ENCODE measurements at regions of chr5 and their contacts with region 1.

Region 1: GRCh38 chr5:180291943-180292831 is at the start of gene MAPK9:
- DNase-seq: peak; percentile 96
- H3K4me3 Mint-ChIP-seq: peak within 1 kb of the TSS; percentile 95
- H3K27ac Mint-ChIP-seq: peak within 1 kb of the TSS; percentile 95
- H3K4me1 Mint-ChIP-seq: peaks cover 28% of the 10 kb centered on the region
- H3K27me3 Mint-ChIP-seq: no peaks in the 10 kb centered on the region
- total RNA-seq, gene MAPK9: 44.5 and 45.0 TPM in 2 replicates

Region 2: DNA sequence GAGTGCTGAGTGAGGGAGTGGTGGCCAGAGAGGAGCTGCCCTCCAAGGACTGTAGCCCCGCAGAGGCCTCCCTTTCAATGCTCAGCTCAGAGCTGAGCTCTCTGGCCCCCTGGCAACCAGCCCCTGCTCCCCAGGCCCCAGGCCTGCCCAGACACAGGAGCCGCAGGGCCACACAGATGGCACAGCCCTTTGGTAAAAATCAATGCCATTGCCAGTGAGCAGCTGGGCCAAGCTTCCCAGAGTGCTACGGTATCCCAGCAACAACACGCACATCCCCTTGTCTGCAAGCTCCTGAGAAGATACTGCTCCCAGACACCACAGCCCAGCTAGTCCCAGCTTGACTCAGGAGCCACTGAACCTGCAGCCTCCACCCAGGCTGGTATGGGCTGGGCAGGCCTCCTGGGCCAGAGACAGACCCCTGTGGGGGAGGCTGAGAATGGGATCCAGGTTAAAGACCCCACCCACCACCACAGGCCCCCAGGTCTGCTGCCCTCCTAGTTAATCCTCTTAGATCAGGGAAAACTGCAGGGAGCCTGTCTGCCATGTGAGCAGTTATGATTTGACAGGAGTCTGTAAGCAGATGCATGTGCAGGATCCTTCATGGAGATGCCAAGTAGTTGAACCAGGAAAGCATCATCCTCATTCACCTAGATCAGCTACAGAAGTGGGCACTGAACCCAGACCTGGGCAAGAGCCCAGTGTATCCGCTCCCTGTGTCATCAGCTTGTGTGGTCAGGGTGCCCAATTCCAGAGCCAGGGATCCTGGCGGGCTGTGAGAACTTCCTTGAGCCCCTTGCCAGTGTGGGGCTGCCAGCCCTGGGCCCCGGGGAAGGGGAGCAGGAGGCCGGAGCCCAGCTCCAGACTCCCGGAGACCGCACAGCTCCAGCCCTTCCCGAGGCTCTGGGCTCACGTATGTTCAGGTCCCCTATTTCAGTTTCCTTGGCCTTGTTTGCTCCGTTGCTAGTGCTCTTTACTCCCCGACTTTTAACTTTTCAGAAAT is 920.2 kb before region 1 on chr5:
- intact Hi-C with region 1: no loop called
- DNase-seq: no peak
- H3K4me3 Mint-ChIP-seq: no peak overlapping the region
- H3K27ac Mint-ChIP-seq: no peak overlapping the region
- H3K4me1 Mint-ChIP-seq: no peaks in the 10 kb centered on the region
- H3K27me3 Mint-ChIP-seq: no peaks in the 10 kb centered on the region

Region 3: GRCh38 chr5:180142824-180143610 is 149.2 kb before region 1 on chr5:
- intact Hi-C with region 1: no loop called
- DNase-seq: peak; percentile 33
- H3K4me3 Mint-ChIP-seq: no peak overlapping the region
- H3K27ac Mint-ChIP-seq: no peak overlapping the region
- H3K4me1 Mint-ChIP-seq: no peaks in the 10 kb centered on the region
- H3K27me3 Mint-ChIP-seq: peaks cover 9% of the 10 kb centered on the region

Region 4: DNA sequence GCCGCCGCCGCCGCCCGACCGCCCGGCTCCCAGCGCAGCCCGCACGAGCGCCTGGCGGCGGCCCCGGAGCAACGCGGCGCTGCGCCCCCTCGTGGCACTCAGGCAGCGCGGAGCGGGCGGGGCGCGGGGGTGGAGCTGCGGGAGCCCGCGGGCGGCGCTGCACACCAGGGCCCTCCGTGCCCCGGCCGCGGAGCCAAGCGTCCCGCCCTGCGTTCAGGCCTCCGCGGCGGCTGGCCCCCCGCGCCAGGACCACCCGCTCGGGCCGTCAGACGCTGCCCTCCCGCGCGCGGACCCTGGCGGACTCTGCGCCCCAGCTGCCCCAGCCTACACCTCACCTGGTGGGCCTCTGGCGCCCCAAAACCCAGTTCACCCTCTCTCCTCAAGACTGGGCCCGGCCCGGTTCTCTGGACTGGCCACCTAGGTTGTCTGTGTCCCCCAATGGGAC is 83.0 kb before region 1 on chr5 and contains the start of gene RASGEF1C:
- intact Hi-C with region 1: loop called (anchors 5 kb)
- DNase-seq: peak; percentile 92
- H3K4me3 Mint-ChIP-seq: peak within 1 kb of the TSS; percentile 44
- H3K27ac Mint-ChIP-seq: no peak within 1 kb of the TSS
- H3K4me1 Mint-ChIP-seq: peaks cover 4% of the 10 kb centered on the region
- H3K27me3 Mint-ChIP-seq: peaks cover 21% of the 10 kb centered on the region
- total RNA-seq, gene RASGEF1C: not detected in 2 replicates

Region 5: DNA sequence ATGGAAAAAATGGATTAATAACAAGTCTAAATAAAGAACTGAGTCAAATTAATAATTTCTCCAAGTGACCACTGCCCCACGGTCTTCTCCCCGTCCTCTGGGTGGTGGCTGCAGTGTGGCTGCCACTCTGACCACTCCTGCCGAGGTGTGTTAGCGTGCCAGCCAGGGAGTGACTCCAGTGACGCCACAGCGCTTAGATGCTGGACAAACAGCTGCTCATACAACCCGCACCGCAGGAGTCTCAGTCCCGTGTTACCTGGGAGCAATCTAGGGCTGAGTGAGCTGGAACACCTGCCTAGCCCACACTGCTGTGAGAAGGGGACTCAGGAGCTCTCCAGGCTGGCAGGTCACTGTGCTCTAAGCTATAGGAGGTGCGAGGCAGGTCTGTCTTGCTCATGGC is 10.5 kb before region 1 on chr5:
- intact Hi-C with region 1: no loop called
- DNase-seq: no peak
- H3K4me3 Mint-ChIP-seq: no peak overlapping the region
- H3K27ac Mint-ChIP-seq: no peak overlapping the region
- H3K4me1 Mint-ChIP-seq: no peaks in the 10 kb centered on the region
- H3K27me3 Mint-ChIP-seq: no peaks in the 10 kb centered on the region

Region 6: DNA sequence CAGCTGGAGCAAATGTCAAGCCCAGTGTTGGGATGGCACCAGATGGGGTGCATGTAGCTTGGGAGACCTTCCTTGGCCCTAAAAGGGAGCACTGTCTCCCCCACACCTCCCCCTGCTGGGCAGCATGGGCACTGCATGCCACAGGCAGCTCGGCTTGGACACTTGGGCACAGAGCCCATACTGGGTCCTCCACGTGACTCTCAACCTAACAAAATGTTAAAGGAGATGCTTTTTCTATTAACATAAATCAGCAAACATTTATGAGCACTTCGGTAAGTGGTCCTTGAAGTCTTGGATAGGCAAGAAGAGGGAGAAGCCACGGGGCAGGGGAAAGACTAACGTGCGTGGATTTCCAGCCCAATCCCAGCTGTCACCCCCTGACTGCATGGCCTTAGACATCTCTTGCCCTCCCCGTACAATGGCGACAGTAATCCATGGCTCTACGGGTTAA is 23.6 kb after region 1 on chr5:
- intact Hi-C with region 1: loop called (anchors 1 kb)
- DNase-seq: peak; percentile 91
- H3K4me3 Mint-ChIP-seq: no peak overlapping the region
- H3K27ac Mint-ChIP-seq: no peak overlapping the region
- H3K4me1 Mint-ChIP-seq: no peaks in the 10 kb centered on the region
- H3K27me3 Mint-ChIP-seq: no peaks in the 10 kb centered on the region

Region 7: DNA sequence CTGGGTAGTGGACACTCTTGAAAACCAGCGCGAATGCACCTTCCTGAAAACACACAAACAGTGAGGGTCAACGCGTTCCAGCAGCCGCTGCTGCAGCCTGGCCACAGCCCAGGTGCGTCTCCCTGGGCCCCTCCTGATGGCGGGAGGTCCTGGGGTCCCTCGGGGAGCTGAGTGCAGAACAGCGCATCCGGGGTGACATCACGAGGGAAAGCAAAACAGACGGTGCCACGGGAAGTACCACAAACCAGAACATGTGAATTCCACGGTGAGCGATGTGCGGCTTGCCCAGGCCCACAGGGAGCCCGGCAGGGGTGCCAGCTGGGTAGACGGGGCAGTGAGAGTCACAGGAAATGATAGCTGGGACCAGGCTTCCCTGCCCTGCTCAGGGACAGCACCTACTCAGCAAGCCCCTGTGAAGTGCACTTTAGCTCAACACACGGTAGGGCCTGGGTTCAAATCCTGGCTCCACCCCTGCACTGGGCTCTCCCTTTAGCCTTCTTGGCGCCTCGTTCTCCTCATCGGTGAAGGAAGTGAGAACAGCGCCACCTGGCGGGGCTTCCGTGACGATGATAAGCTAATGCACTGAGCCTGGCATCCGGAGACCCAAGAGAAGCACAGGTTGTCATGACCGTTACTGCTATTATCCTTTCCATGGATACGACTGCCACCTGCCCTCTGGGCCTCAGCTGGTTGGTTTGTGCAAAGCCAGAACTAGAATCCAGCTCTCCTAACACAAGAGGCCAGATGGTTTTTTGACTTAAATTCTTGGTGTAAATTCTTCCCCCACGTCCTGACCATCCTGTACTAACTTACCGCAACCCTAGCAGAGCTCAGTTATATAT is 36.3 kb after region 1 on chr5:
- intact Hi-C with region 1: loop called (anchors 1 kb)
- DNase-seq: peak; percentile 93
- H3K4me3 Mint-ChIP-seq: no peak overlapping the region
- H3K27ac Mint-ChIP-seq: no peak overlapping the region
- H3K4me1 Mint-ChIP-seq: no peaks in the 10 kb centered on the region
- H3K27me3 Mint-ChIP-seq: peaks cover 12% of the 10 kb centered on the region

Region 8: DNA sequence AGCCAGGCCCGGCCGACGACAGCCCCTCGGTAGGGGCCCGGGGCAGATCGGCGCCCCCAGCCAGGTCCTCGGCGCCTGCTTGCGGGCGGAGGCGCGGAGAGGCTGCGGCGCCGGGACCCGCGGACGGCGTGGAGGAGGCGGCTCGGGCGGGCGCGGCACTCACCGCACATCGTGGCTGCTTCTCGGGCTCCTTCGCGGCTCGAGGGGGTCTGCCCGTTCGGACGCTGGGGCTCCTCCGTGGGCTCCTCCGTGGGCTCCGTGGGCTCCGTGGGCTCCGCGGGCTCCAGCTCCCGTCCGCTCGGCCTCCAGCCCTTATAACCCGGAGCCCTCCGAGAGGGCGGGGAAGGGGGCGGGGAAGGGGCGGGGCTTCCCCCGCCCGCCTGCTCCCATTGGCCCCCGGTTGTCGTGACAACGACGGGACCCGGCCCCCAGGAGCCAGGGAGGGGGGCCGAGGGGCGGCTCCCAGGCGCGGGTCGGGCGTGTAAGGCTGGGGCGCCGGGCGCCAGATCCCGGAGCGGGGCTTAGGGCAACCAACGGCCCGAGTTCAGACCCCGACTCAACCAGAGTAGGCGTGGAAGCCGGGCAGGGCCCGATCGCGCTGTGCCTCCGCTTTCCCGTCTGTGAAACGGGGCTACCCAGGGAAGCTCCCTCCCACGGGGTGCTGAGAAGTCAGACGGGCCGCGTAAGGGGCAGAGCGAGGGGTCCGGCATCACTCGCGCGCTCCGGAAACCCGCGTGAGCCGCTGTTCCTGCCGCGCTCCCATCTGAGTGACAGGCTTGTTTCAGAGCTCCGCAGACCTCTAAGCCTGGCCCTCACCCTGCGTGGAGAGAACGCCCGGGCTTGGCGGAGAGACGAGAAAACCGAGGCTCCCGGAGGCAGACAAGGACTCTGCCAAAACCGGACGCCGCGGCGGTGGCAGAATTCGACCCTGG is 61.1 kb after region 1 on chr5 and contains the start of gene GFPT2:
- intact Hi-C with region 1: loop called (anchors 1 kb)
- DNase-seq: peak; percentile 91
- H3K4me3 Mint-ChIP-seq: peak within 1 kb of the TSS; percentile 79
- H3K27ac Mint-ChIP-seq: no peak within 1 kb of the TSS
- H3K4me1 Mint-ChIP-seq: no peaks in the 10 kb centered on the region
- H3K27me3 Mint-ChIP-seq: peaks cover 53% of the 10 kb centered on the region
- total RNA-seq, gene GFPT2: 0.42 TPM in 1 of 2 replicates, not detected in the other

Region 9: DNA sequence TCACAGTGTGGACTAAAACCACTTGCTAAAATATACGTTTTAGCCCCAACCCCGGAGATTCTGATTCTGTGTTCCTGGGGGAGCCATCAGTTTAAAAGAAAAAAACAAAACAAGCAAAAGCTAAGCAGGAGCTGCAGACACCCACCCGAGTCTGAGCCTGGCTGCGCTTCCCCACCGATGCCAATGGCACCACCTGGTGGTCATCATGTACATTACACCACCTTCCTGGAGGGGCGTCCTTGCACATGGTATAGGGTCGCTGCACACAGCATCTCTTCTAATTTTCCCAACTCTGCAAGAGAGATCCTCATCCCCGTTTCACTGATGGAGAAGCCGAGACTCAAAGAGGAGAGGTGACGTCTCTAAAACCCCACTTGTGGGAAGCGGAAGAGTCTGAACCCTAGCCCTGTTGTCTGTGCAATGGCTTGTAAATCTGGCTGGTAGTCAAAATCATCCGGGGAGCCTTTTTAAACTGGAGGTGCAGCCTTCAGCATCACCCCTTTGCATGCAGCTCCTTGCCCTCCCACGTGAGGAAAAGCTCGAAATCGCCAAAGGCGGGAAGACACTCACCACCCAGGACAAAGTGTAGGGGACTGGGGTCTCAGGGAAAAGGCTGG is 178.9 kb after region 1 on chr5:
- intact Hi-C with region 1: loop called (anchors 1 kb)
- DNase-seq: peak; percentile 85
- H3K4me3 Mint-ChIP-seq: no peak overlapping the region
- H3K27ac Mint-ChIP-seq: no peak overlapping the region
- H3K4me1 Mint-ChIP-seq: no peaks in the 10 kb centered on the region
- H3K27me3 Mint-ChIP-seq: peaks cover 2% of the 10 kb centered on the region

Region 10: DNA sequence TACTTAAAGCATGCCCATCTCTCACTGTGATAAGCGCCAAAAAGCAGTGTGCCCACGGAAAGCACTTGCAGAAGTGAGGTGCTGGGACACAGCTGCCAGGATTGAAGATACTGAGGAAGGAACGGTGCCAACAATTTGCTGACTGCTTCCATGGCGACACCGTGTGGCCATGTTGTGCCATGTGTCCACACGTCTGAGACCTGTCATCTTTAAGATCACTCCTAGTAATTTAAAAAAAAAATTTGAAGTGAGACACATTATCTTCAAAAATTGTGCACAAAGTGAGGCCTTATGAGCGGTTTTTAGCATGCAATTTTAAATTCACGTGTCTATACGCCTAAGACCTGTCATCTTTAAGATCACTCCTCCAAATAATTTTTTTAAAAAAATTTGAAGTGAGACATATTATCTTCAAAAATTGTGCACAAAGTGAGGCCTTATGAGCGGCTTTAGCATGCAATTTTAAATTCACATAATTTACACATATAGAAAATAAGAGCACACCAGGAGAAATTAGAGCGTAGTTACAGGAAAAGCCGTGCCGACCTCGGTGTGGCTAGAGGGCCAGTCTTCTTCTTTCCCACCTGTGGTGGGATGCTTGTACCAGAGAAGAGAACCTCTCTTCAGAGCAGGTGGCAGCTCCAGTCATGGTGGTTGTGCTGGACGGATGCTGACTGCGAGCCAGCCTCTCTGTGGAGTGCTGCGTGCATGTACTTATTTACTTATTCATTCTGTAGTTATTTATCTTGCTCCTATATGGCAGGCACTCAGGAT is 378.6 kb after region 1 on chr5:
- intact Hi-C with region 1: loop called (anchors 1 kb)
- DNase-seq: peak; percentile 80
- H3K4me3 Mint-ChIP-seq: no peak overlapping the region
- H3K27ac Mint-ChIP-seq: no peak overlapping the region
- H3K4me1 Mint-ChIP-seq: peaks cover 5% of the 10 kb centered on the region
- H3K27me3 Mint-ChIP-seq: peaks cover 24% of the 10 kb centered on the region